ENCODE measurements at regions of chr18 and their contacts with region 1.

Region 1: GRCh38 chr18:51197661-51198424 is at the start of gene MEX3C:
- DNase-seq: peak; percentile 99
- ATAC-seq: peak; percentile 96
- total RNA-seq, gene MEX3C: 20.5 TPM

Region 2: DNA sequence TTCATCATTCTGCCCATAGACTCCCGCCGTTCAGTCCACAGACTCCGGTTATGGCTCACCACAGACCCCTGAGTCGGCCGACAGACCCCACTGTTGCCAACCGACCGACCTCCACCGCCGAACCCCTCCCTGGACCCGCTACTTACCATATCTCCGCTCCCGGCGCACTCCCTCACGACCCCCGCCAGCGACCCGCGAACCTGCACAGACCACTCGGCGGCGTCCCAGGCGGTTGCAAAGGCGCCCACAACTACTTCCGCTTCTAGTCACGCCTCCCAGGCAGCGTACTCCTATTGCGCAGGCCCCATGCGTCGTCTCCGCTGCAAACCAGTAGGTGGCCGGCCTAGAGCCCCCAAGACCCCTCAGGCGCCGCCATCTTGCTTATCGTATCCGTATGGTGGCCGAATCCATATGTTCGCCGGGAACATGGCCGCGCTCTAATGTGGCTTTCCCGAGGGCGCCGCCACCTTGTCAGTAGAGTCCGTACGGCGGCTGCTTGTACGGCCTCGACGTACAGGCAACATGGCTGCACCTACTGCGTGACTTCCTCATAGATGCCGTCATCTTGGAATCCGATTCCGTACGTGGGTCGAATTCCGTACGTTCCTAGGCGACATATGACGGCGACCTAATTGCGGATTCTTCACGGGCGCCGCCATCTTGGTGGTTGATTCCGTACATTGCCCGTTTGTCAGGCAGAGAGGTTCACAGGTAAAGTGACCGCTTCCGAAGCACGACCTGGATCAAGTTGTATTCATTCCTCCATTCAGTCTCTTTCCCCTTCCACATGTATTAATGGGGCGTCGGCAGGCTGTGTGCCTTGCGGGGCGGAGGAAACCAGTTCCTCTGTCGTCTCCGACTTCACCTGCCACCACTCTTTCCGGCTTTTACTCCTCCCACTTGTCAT is 910.1 kb before region 1 on chr18 and contains the start of gene CXXC1:
- intact Hi-C with region 1: loop called (anchors 10 kb)
- DNase-seq: peak; percentile 99
- ATAC-seq: peak; percentile 95
- total RNA-seq, gene CXXC1: 32.8 TPM

Region 3: GRCh38 chr18:51029694-51030536 is 167.9 kb before region 1 on chr18 and contains the start of gene SMAD4:
- intact Hi-C with region 1: loop called (anchors 5 kb)
- DNase-seq: peak; percentile 98
- ATAC-seq: peak; percentile 96
- total RNA-seq, gene SMAD4: 94.7 TPM

Region 4: DNA sequence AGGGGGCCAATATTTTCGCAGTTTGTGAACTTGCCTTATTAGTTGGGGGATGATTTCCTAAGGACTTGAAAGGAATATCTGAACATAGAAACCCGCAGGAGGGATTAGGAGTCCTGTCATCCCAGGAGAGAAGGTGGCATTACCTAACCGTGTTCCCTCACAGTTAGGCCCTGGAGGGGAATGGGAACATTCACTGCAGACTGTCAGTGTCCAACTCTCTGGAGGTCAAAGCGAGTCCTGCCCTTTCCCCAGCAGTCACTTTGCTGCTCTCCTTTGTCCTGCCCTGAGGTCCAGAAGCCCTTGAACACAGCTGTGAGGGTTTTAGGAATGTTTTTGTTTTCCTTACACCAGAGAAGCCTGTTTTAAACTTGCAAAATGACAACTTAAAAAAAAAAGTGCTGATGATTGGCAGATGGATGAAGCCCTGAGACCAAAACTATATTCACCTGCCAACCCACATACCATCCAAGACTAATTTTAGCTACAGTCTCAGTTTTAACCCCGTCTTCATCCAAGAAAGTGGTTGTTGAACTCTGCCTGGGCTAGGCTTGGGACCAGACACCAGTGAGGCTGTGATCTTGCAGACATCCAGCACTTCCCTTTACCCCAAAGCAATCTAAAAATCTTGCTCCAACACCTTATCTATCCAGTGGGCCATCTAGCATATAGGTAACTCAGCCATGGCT is 90.1 kb after region 1 on chr18:
- intact Hi-C with region 1: loop called (anchors 5 kb)
- DNase-seq: no peak
- ATAC-seq: peak; percentile 75

Region 5: GRCh38 chr18:51498085-51498855 is 300.4 kb after region 1 on chr18:
- intact Hi-C with region 1: loop called (anchors 5 kb)
- DNase-seq: peak; percentile 53
- ATAC-seq: peak; percentile 95

Measured in Right ventricle myocardium inferior (tissue), 1 donor.